ENCODE measurements at regions of chr11 and their contacts with region 1.

Region 1: GRCh38 chr11:130243816-130244215 is 70.9 kb downstream of the ZBTB44 start:
- DNase-seq: no peak
- H3K4me3 ChIP-seq: no peak overlapping the region
- H3K27ac ChIP-seq: no peak overlapping the region
- H3K4me1 ChIP-seq: no peaks in the 10 kb centered on the region
- H3K27me3 ChIP-seq: no peaks in the 10 kb centered on the region
- CTCF ChIP-seq: no peak

Region 2: GRCh38 chr11:130181295-130182272 is 62.2 kb before region 1 on chr11:
- CTCF ChIA-PET with region 1: no interaction called
- dilution Hi-C with region 1: no loop called
- in situ Hi-C with region 1: no loop called
- intact Hi-C with region 1: no loop called
- DNase-seq: peak; percentile 76
- H3K4me3 ChIP-seq: no peak overlapping the region
- H3K27ac ChIP-seq: no peak overlapping the region
- H3K4me1 ChIP-seq: peaks cover 39% of the 10 kb centered on the region
- H3K27me3 ChIP-seq: no peaks in the 10 kb centered on the region
- CTCF ChIP-seq: no peak

Region 3: DNA sequence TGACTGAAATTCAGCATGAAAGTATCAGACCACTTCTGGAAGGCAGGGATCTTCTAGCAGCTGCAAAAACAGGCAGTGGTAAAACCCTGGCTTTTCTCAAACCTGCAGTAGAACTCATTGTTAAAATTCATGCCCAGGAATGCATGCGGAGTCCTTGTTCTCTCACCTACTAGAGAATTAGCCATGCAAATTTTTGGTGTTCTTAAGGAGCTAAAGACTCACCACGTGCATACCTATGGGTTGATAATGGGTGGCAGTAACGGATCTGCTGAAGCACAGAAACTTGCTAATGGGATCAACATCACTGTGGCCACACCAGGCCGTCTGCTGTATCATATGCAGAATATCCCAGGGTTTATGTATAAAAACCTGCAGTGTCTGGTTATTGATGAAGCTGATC is 51.8 kb after region 1 on chr11:
- CTCF ChIA-PET with region 1: no interaction called
- dilution Hi-C with region 1: loop called (anchors 5 kb)
- in situ Hi-C with region 1: no loop called
- intact Hi-C with region 1: no loop called
- DNase-seq: no peak
- H3K4me3 ChIP-seq: no peak overlapping the region
- H3K27ac ChIP-seq: no peak overlapping the region
- H3K4me1 ChIP-seq: no peaks in the 10 kb centered on the region
- H3K27me3 ChIP-seq: no peaks in the 10 kb centered on the region
- CTCF ChIP-seq: no peak